ENCODE measurements at regions of chr20 and their contacts with region 1.

Region 1: DNA sequence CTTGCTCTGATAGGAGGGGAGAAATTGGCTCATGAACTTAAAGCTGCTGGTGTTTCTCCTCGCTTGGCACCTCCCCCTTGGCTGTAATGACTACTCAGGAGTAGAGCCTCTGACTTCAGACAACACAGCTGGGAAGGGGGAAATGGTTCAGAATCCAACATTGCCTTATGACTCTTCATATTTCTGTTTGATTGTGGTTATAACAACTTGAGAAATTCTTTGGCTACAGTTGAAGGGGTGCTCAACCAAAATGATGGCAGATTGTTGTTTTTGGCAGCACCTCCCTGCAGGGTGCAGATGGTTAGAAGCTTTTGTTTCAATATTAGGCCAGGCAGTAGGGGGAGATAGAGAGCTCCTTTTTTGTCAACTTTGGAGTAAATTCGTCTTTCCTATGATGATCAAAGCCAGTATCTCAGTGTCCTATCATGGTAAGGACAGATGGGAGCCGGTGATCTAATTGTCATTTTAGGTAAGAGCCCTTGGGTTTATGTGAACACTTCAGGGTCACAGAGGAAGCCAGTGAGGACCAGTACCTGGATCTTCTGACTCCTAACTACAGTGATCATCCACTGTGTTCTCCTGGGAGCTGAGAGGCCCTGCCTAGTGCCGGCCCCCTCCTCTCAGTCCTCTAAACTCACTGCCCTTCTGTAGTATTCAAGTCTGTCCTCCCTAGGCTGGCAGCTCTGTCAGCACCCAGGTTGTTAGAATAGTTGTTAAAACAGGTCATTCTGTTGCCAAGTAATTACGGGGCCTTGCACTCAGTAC is 39.9 kb downstream of the RPRD1B start:
- DNase-seq: peak; percentile 94
- H3K4me3 Mint-ChIP-seq: peak overlapping the region; percentile 31
- H3K27ac Mint-ChIP-seq: peak overlapping the region; percentile 44
- H3K4me1 Mint-ChIP-seq: peaks cover 21% of the 10 kb centered on the region
- H3K27me3 Mint-ChIP-seq: no peaks in the 10 kb centered on the region
- CTCF ChIP-seq: peak; percentile 47

Region 2: DNA sequence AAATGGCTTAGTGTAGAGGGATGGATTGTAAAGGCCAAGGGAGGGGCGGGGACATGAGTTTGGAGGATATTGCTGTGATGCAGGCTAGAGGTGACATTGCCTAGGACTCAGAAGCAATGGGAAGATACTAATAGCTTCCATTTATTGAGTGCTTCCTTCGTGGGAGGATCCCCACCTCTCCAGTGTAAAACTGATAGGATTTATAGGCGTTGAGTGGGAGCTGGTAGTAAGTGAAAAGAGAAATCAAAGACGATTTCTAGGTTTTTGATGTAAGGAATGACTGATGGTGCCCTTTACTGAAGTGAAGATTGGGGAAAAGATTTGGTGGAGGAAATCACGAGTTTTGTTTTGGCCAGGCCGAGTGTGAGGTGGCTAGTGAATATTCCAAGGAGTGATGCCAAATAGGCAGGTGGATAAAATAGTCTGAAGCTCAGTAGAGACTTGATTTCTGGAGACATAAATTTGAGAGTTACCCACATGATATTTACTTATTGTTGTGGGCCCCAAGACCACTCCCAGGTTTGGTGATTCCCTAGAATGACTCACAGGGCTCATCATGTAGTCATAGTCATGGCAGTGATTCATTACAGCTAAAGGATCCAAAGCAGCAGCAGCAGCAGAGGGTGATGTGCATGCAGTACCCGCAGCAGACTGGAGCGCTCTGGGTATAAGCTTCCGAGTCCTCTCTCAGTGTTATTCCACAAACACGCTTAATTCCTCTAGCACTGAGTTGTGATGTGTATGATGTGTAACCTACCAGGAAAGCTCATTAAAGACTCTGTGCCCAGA is 29.8 kb before region 1 on chr20:
- CTCF ChIA-PET with region 1: interaction called, 10 read pairs
- POLR2A ChIA-PET with region 1: no interaction called
- intact Hi-C with region 1: no loop called
- DNase-seq: peak; percentile 85
- H3K4me3 Mint-ChIP-seq: no peak overlapping the region
- H3K27ac Mint-ChIP-seq: peak overlapping the region; percentile 88
- H3K4me1 Mint-ChIP-seq: peaks cover 19% of the 10 kb centered on the region
- H3K27me3 Mint-ChIP-seq: no peaks in the 10 kb centered on the region
- CTCF ChIP-seq: no peak

Region 3: GRCh38 chr20:38084400-38084951 is 11.0 kb after region 1 on chr20:
- CTCF ChIA-PET with region 1: interaction called, 49 read pairs
- POLR2A ChIA-PET with region 1: interaction called, 6 read pairs
- intact Hi-C with region 1: no loop called
- DNase-seq: no peak
- H3K4me3 Mint-ChIP-seq: no peak overlapping the region
- H3K27ac Mint-ChIP-seq: no peak overlapping the region
- H3K4me1 Mint-ChIP-seq: no peaks in the 10 kb centered on the region
- H3K27me3 Mint-ChIP-seq: no peaks in the 10 kb centered on the region
- CTCF ChIP-seq: no peak

Region 4: GRCh38 chr20:38113401-38114325 is 40.2 kb after region 1 on chr20:
- CTCF ChIA-PET with region 1: interaction called, 16 read pairs
- POLR2A ChIA-PET with region 1: interaction called, 5 read pairs
- intact Hi-C with region 1: no loop called
- DNase-seq: peak; percentile 54
- H3K4me3 Mint-ChIP-seq: no peak overlapping the region
- H3K27ac Mint-ChIP-seq: no peak overlapping the region
- H3K4me1 Mint-ChIP-seq: peaks cover 41% of the 10 kb centered on the region
- H3K27me3 Mint-ChIP-seq: no peaks in the 10 kb centered on the region
- CTCF ChIP-seq: no peak

Region 5: DNA sequence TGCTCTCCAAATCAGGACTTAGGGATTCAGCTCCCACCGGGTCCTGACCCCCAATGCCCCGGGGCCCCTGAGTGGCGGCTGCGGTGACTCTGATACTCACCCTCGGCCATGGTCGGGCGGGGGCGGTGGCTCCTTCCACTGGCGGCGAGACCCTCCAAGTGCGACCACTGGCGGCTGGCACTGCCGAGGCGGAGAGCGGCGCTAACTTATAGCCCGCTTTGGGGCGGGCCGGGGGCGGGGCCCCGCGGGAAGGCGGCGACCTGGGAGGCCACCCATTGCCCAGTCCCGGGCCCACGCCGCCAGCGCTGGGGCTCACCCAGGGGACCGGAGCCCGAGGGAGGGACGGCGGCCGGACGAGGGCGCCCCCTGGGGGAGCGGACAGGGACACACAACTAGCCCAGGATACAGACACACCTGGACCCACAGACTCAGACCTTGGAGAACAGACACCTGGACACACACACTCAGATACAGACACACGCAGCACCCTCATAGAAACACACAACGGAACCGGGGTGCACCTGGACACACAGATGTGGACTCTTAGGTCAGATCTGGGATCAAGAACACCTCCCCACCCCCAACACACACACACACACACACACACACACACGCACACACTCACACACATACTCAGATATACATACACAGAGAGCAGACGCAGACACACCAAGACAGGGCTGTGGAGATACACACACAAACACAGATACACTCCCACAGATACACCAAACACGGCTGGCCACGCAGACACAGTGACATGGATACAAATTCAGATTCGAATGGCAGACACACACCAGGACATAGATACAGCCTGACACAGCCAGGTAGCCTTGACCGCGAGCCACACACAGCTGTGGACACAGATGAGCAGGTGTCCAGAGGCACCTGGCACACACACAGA is 91.8 kb after region 1 on chr20 and contains the start of gene TGM2:
- CTCF ChIA-PET with region 1: interaction called, 70 read pairs
- POLR2A ChIA-PET with region 1: interaction called, 3 read pairs
- intact Hi-C with region 1: loop called (anchors 1 kb)
- DNase-seq: peak; percentile 75
- H3K4me3 Mint-ChIP-seq: peak within 1 kb of the TSS; percentile 11
- H3K27ac Mint-ChIP-seq: peak within 1 kb of the TSS; percentile 61
- H3K4me1 Mint-ChIP-seq: peaks cover 41% of the 10 kb centered on the region
- H3K27me3 Mint-ChIP-seq: no peaks in the 10 kb centered on the region
- CTCF ChIP-seq: peak; percentile 75
- total RNA-seq, gene TGM2: 0.76 and 1.5 TPM in 2 replicates

Region 6: DNA sequence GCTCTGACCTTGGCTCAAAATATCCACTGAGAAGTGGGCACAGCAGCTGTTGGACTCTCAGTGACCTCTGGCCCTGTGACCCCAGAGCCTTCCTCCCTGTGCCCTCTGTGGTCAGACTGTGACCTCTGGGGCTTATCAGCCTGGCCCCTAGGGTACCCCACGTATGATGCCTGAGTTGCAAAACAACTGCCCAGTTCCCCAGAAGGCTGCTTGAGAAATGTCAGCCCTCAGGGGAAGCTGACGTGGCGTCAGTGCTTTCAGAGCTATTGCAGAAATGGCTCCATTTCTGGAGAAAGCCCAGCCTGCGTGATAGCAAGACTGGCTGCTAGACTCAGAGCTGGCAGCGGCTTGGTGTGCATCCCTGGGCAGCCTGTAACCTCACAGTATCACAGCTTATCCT is 123.1 kb after region 1 on chr20:
- CTCF ChIA-PET with region 1: interaction called, 24 read pairs
- POLR2A ChIA-PET with region 1: interaction called, 8 read pairs
- intact Hi-C with region 1: no loop called
- DNase-seq: peak; percentile 82
- H3K4me3 Mint-ChIP-seq: no peak overlapping the region
- H3K27ac Mint-ChIP-seq: peak overlapping the region; percentile 3
- H3K4me1 Mint-ChIP-seq: peaks cover 39% of the 10 kb centered on the region
- H3K27me3 Mint-ChIP-seq: no peaks in the 10 kb centered on the region
- CTCF ChIP-seq: no peak

Measured in MCF 10A (cell line).